Dendritic cell treated with granulocyte-macrophage colony-stimulating factor and Interleukin-4, amounts not matched to agents 40 ng/mL and 50 ng/mL, for 4 days (primary cell): ENCODE measurements at regions of chr12 and their contacts with region 1.

Region 1: GRCh38 chr12:110742718-110743570 is at the start of gene PPP1CC:
- H3K4me3 Mint-ChIP-seq: peak within 1 kb of the TSS; percentile 95
- H3K27ac Mint-ChIP-seq: peak within 1 kb of the TSS; percentile 90
- H3K4me1 Mint-ChIP-seq: peaks cover 46% of the 10 kb centered on the region
- H3K27me3 Mint-ChIP-seq: no peaks in the 10 kb centered on the region

Region 2: GRCh38 chr12:110613771-110614684 is 128.9 kb before region 1 on chr12 and contains the start of gene TCTN1:
- intact Hi-C with region 1: loop called (anchors 2 kb)
- H3K4me3 Mint-ChIP-seq: peak within 1 kb of the TSS; percentile 89
- H3K27ac Mint-ChIP-seq: peak within 1 kb of the TSS; percentile 91
- H3K4me1 Mint-ChIP-seq: peaks cover 4% of the 10 kb centered on the region
- H3K27me3 Mint-ChIP-seq: no peaks in the 10 kb centered on the region